ENCODE measurements at regions of chr10 and their contacts with region 1.

Region 1: DNA sequence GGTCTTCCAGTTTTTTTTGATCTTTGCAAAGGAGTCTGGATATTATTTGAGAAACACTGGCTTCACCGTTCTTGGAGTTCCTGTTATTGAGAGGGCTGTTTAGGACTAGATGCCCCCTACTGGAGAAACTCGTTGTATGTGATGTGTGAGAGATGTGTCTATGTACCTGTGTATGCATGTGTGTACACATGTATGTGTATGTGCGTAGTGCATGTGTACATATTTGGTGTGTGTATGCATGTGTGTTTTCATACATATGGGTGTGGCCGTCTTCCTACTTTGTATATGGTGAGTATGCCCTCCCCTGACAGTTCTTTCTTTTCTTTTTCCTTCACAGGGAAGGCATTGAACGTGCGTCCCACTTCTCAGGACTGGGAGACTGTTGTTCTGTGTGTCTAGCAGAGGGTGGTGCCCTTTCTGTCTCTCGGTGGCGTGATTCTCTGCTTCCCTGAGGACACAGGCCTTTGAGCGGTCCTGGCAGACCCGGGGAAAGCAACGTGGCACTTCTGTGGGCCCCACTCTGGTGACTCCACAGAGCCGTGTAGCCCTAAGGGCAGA is 3.0 kb upstream of the CALHM3 start:
- DNase-seq: no peak
- ATAC-seq: peak; percentile 87
- H3K4me3 Mint-ChIP-seq: no peak overlapping the region
- H3K27ac Mint-ChIP-seq: peak overlapping the region; percentile 37
- H3K4me1 Mint-ChIP-seq: peaks cover 14% of the 10 kb centered on the region
- H3K27me3 Mint-ChIP-seq: no peaks in the 10 kb centered on the region

Region 2: DNA sequence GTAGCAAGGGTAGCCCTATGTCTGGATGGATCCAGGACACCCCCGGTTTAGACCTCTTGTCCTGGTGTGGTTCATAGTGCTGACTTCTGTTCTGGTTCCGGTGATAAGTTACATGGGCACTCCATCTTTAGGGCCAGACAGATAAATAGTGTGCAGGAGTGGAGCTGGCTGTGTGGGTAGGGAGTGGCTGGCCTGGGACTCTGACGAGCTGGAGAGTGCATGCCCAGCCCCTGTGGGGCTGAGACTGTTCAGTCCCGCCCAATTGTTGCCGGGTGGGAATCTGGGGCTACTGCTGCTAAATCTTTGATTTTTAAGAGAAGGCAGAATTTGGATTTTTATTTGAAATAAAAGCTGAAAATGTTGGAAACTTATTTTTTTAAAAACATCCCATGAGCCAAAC is 58.3 kb before region 1 on chr10:
- CTCF ChIA-PET with region 1: interaction called, 175 read pairs
- DNase-seq: no peak
- ATAC-seq: no peak
- H3K4me3 Mint-ChIP-seq: no peak overlapping the region
- H3K27ac Mint-ChIP-seq: no peak overlapping the region
- H3K4me1 Mint-ChIP-seq: peaks cover 10% of the 10 kb centered on the region
- H3K27me3 Mint-ChIP-seq: no peaks in the 10 kb centered on the region

Region 3: DNA sequence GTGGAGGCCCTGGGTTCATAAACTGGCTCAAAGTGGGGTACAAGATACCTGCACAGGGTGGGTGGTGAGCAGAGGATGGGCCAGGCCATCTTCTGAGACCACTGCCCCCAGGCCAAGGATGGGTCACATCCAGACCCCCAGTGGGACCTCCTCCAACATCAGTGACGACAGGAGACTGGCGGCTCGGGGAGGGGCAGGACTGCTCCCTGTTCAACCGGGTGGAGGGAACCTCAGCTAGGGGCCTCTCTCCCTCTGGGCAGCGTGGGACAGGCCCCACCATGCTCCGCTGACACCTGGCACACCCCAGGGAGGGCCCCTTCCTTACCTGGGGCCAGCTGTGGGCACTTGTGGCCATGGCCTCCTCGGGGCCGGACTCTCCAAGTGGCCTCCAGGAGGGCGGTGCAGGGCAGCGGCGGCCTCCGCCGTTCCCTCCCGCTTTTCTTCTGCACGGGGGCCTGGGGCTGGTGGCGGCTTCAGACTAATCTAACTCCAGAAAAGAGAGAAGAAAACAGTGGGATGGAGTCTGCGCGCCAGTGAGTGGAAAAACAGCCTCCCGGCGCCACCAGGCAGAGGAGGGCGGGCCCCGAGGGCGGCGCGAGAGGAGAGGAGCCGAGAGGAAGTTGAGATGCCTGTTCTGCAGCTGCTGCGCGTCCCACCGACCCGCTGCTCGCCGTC is 30.1 kb before region 1 on chr10 and contains the start of gene CALHM2:
- CTCF ChIA-PET with region 1: interaction called, 54 read pairs
- DNase-seq: peak; percentile 74
- ATAC-seq: peak; percentile 83
- H3K4me3 Mint-ChIP-seq: peak within 1 kb of the TSS; percentile 82
- H3K27ac Mint-ChIP-seq: peak within 1 kb of the TSS; percentile 89
- H3K4me1 Mint-ChIP-seq: peaks cover 56% of the 10 kb centered on the region
- H3K27me3 Mint-ChIP-seq: no peaks in the 10 kb centered on the region
- total RNA-seq, gene CALHM2: 65.6 to 93.4 TPM

Region 4: GRCh38 chr10:103470761-103471653 is 11.0 kb before region 1 on chr10:
- CTCF ChIA-PET with region 1: interaction called, 29 read pairs
- DNase-seq: peak; percentile 97
- ATAC-seq: peak; percentile 88
- H3K4me3 Mint-ChIP-seq: peak overlapping the region; percentile 68
- H3K27ac Mint-ChIP-seq: peak overlapping the region; percentile 97
- H3K4me1 Mint-ChIP-seq: peaks cover 65% of the 10 kb centered on the region
- H3K27me3 Mint-ChIP-seq: no peaks in the 10 kb centered on the region

Region 5: GRCh38 chr10:103564776-103565520 is 82.9 kb after region 1 on chr10:
- CTCF ChIA-PET with region 1: interaction called, 10 read pairs
- DNase-seq: peak; percentile 65
- ATAC-seq: peak; percentile 70
- H3K4me3 Mint-ChIP-seq: no peak overlapping the region
- H3K27ac Mint-ChIP-seq: no peak overlapping the region
- H3K4me1 Mint-ChIP-seq: no peaks in the 10 kb centered on the region
- H3K27me3 Mint-ChIP-seq: peaks cover 19% of the 10 kb centered on the region